ENCODE measurements at regions of chr13 and their contacts with region 1.

Region 1: DNA sequence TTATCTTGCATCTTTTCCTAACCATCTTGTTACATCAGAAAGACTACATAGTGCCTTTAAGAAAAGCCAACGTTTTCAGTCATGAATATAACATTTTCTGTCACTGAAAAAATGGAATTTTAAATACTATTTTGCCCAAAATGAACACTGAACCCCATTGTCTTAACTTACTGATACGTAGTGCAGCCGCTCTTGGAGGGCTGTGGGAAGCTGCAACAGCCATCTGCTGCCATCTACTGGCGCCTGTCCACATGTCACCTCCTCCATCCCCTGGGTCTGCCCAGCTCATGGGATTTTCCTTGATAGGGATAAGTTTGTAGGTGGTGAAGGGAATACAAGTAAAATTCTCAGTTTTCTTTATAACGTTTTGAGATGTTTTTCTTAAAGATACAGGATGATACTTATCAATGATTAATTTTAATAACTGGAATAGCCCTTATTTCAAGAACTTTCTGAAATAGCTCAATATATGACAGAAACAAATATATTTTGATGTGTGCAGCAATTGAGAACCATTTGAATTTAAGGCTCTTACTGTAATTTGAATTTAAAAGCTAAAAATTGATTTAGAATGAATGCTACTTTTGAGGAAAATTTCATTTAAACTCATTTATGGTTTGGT is 73.7 kb downstream of the GGACT start:
- DNase-seq: peak; percentile 42 to 62
- H3K4me3 ChIP-seq: no peak overlapping the region
- H3K27ac ChIP-seq: no peak overlapping the region
- H3K4me1 ChIP-seq: no peaks in the 10 kb centered on the region
- H3K27me3 ChIP-seq: no peaks in the 10 kb centered on the region
- CTCF ChIP-seq: peak; percentile 97

Region 2: DNA sequence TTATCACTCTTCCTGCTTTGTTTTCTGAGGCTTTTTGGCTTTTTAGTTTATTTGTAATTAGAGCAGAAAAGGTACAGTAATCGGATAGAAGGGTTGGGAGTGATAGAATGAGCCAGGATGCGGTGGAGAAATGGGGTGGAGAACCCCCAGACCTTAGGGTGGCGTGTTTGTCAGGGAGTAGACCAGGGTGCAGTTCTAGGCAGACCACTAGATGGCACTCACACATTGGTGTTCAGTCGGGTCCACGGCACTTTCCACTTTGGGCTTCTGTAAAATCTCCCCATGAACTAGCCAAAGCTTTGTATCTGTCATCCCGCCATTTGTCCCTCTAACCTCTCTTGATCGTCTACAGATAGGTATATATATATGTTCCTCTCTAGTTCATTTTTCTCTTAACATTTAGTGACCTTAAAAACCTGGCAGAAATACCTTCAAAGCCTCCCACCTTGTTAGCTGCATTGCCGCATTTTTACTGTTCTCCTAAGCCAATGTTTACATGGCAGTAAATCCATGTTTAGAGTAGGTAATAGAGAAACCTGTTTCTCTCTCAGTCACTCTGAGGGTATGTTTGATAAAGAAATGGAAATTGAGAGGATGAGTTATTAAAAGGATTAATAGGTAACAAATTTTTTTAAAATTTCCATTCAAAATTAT is 858.7 kb before region 1 on chr13:
- CTCF ChIA-PET with region 1: no interaction called
- POLR2A ChIA-PET with region 1: no interaction called
- intact Hi-C with region 1: loop called (anchors 2 kb)
- DNase-seq: peak; percentile 53 to 60
- H3K4me3 ChIP-seq: no peak overlapping the region
- H3K27ac ChIP-seq: no peak overlapping the region
- H3K4me1 ChIP-seq: no peaks in the 10 kb centered on the region
- H3K27me3 ChIP-seq: no peaks in the 10 kb centered on the region
- CTCF ChIP-seq: peak; percentile 96

Region 3: GRCh38 chr13:99900960-99901359 is 613.9 kb before region 1 on chr13:
- CTCF ChIA-PET with region 1: no interaction called
- POLR2A ChIA-PET with region 1: no interaction called
- intact Hi-C with region 1: loop called (anchors 1 kb)
- DNase-seq: no peak
- H3K4me3 ChIP-seq: no peak overlapping the region
- H3K27ac ChIP-seq: no peak overlapping the region
- H3K4me1 ChIP-seq: no peaks in the 10 kb centered on the region
- H3K27me3 ChIP-seq: no peaks in the 10 kb centered on the region
- CTCF ChIP-seq: no peak

Region 4: GRCh38 chr13:100854021-100854420 is 339.1 kb after region 1 on chr13:
- CTCF ChIA-PET with region 1: no interaction called
- POLR2A ChIA-PET with region 1: no interaction called
- intact Hi-C with region 1: no loop called
- DNase-seq: no peak
- H3K4me3 ChIP-seq: no peak overlapping the region
- H3K27ac ChIP-seq: no peak overlapping the region
- H3K4me1 ChIP-seq: no peaks in the 10 kb centered on the region
- H3K27me3 ChIP-seq: peaks cover 61% of the 10 kb centered on the region
- CTCF ChIP-seq: no peak

Measured in PC-9 (cell line).